Ascending aorta (tissue), 2 donors: ENCODE measurements at regions of chr3 and their contacts with region 1.

Region 1: GRCh38 chr3:134600685-134601463 is 49.9 kb downstream of the KY start:
- DNase-seq: peak in 1 of 2 donors; percentile 68
- H3K4me3 ChIP-seq: no peak overlapping the region
- H3K27ac ChIP-seq: no peak overlapping the region
- H3K4me1 ChIP-seq: no peaks in the 10 kb centered on the region
- H3K27me3 ChIP-seq: no peaks in the 10 kb centered on the region
- CTCF ChIP-seq: peak; percentile 75 to 99 (median 99)

Region 2: DNA sequence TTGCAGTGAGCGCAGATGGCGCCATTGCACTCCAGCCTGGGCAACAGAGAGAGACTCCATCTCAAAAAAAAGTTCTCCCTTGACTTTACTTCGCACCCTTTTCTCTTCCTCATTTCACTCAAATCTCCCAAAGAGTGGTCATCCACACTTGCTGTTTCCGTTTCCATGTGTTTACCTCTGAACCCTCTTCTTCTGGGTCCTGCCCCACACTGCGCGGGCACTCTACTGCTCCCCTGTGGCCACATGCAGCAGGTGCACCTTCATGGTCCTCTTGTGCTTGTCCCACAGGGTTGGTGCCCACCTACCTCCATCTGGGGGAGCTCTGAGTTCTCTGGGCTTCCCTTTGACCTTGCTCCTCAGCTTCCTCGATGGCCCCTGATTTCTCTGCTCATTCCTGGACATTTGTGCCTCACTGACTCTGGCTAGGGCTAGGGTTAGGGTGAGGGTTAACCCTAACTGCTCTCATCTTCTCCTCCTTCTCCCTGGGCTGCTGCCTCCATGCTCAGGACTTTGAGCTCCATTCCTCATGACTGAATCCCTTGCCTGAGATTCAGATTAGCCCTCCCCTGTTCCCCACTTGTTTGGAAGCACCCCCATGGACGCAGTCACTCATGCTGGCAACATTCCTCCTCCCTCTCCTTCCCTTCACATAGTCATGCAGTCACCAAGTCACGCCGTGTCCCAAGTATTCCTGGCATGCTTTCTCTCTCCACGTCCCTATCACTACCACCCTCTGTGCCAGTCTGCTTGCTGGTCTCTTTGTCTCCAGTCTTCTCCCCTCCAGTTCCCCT is 76.5 kb after region 1 on chr3:
- intact Hi-C with region 1: loop called (anchors 1 kb)
- DNase-seq: no peak
- H3K4me3 ChIP-seq: no peak overlapping the region
- H3K27ac ChIP-seq: no peak overlapping the region
- H3K4me1 ChIP-seq: no peaks in the 10 kb centered on the region
- H3K27me3 ChIP-seq: no peaks in the 10 kb centered on the region
- CTCF ChIP-seq: peak; percentile 38 to 65 (median 38)

Region 3: DNA sequence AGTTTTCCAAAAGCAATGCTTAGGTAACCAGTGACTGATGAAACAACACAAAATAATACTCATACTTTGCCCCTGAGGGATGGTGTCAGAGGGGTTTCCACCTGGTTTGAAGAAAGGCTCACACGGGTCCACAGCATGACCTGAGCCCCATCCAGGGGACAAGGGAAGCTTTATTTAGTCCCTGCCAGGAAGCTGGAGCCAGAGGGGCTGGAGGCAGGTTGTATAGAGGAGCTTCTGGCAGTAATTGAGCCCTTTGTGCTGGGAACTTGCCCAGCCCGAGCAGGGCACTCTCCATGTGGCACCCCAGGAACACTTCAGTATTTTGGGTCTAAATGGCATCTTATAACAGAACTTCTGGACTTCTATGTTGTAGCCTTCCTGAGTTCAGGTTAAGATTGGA is 154.9 kb after region 1 on chr3:
- intact Hi-C with region 1: loop called (anchors 2 kb)
- DNase-seq: no peak
- H3K4me3 ChIP-seq: no peak overlapping the region
- H3K27ac ChIP-seq: no peak overlapping the region
- H3K4me1 ChIP-seq: no peaks in the 10 kb centered on the region
- H3K27me3 ChIP-seq: no peaks in the 10 kb centered on the region
- CTCF ChIP-seq: no peak

Region 4: DNA sequence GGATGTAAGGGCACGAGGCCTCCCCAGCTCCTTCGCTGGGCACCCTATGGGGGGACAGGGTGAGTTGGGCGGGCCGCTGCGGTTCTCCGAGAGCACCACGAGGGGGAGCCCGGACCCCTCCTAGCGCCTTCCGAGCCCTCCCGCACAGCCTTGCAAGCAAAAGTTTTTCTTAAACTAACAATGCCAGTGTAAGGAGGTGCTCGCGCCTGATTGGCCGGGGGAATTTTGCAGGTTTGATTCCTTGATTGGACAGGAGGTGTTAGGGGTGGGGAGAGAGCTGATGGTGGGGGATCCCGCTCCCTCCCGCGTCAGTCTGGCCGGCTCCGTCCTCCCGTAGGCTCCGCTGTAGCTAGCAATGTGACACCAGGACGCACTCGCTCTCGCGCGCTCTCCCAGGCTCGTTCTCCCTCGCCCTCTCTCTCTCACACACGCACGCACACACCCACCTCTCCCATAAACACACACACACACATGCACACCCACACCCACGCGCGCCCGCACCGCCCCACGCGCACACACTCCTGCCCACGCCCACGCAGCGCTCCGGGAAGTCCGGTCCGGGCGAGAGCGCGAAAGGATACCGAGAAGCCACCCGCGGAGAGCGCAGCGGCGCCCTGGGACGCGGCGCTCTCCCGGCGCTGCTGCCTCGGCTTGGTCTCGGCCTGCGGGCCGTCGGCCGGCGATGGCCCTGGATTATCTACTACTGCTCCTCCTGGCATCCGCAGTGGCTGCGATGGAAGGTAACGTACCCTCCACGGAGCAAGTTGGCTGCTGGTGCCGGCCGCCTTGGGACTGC is 194.3 kb after region 1 on chr3 and contains the start of gene EPHB1:
- intact Hi-C with region 1: loop called (anchors 5 kb)
- DNase-seq: peak; percentile 38 to 87
- H3K4me3 ChIP-seq: peak within 1 kb of the TSS; percentile 44 to 84
- H3K27ac ChIP-seq: no peak within 1 kb of the TSS
- H3K4me1 ChIP-seq: peaks cover 0 to 3% of the 10 kb centered on the region in 2 donors
- H3K27me3 ChIP-seq: no peaks in the 10 kb centered on the region
- CTCF ChIP-seq: peak; percentile 68 to 92 (median 84)
- total RNA-seq, gene EPHB1: 0.53 TPM

Region 5: DNA sequence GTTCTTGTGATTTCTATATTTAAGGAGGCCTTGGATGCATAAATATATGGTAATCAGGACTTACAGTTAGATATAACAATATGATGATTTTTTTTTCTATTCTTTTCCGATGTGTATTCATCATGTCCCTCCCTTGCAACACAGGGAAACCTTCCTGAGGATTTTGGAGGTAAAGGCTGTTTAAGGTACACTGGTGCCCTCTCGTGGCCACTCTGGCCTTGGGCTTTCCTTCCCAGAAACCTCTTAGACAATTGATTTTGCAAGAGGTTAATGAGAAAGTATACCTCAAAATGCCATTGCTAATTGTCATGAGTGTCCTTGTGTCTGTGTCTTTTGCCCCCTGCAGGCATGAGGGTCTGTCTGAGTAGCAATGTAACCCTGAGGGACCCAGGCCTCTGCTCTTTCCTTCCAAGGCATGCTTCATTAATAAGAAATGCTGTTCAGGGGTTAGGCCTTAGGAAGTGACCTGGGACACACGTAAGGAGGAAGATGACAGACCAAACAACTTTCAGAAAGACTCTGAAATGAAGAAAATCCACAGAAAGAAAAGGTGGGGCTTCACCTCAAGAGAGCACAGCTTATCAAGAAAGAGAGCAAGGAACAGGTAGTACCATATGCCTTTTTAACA is 1294.3 kb after region 1 on chr3:
- intact Hi-C with region 1: loop called (anchors 2 kb)
- DNase-seq: peak in 1 of 2 donors; percentile 65
- H3K4me3 ChIP-seq: no peak overlapping the region
- H3K27ac ChIP-seq: no peak overlapping the region
- H3K4me1 ChIP-seq: no peaks in the 10 kb centered on the region
- H3K27me3 ChIP-seq: no peaks in the 10 kb centered on the region
- CTCF ChIP-seq: peak; percentile 25 to 77 (median 52)